ENCODE measurements at regions of chr1 and their contacts with region 1.

Region 1: DNA sequence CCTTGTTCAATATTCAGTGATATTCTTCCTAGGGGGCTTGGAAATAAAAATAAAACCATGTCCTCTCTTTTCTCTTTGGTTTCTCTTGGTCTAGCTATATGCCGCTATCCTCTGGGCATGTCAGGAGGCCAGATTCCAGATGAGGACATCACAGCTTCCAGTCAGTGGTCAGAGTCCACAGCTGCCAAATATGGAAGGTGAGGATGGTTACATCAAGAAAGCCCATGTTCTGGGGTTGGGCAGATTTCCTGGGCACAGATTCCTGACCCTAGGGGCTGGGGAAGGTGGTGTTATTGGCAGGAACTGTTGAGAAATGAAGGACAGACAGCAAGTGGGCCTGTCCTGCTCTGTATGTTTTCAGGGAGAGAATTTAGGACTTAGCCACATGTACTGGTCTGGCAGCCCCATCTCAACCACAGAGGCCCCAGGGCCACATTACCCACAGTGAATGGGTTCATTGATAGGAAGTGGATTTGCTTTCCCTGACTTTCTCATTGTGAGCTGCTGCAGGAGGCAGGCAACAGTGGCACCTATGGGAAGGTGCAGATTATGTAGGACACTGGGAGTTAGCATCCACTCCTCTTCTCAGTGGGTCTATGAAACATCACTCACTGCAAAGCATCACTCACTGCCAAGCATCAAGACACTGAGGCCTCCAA is 37.4 kb upstream of the HSD17B7 start:
- DNase-seq: peak; percentile 68
- ATAC-seq: peak; percentile 99
- H3K4me3 ChIP-seq: peak overlapping the region in 1 of 3 experiments; percentile 4; a peak in 1 of 6 replicates
- H3K27ac ChIP-seq: peak overlapping the region; percentile 30
- H3K4me1 ChIP-seq: peaks cover 18% of the 10 kb centered on the region
- H3K27me3 ChIP-seq: no peaks in the 10 kb centered on the region
- CTCF ChIP-seq: peak; percentile 50
- EP300 ChIP-seq: no peak
- POLR2A ChIP-seq: no peak
- RAD21 ChIP-seq: peak; percentile 19; the same call in 1 of the 2 replicates

Region 2: GRCh38 chr1:162206749-162207635 is 546.1 kb before region 1 on chr1:
- CTCF ChIA-PET with region 1: no interaction called
- POLR2A ChIA-PET with region 1: no interaction called
- in situ Hi-C with region 1: no loop called
- intact Hi-C with region 1: loop called (anchors 5 kb)
- DNase-seq: peak; percentile 21
- ATAC-seq: peak; percentile 34; the same call in 1 of the 3 replicates
- H3K4me3 ChIP-seq: no peak overlapping the region
- H3K27ac ChIP-seq: no peak overlapping the region
- H3K4me1 ChIP-seq: peaks cover 47% of the 10 kb centered on the region
- H3K27me3 ChIP-seq: no peaks in the 10 kb centered on the region; a peak in 1 of 5 replicates
- CTCF ChIP-seq: no peak
- EP300 ChIP-seq: no peak
- POLR2A ChIP-seq: no peak
- RAD21 ChIP-seq: no peak

Region 3: GRCh38 chr1:162596514-162597170 is 156.5 kb before region 1 on chr1:
- CTCF ChIA-PET with region 1: no interaction called
- POLR2A ChIA-PET with region 1: no interaction called
- in situ Hi-C with region 1: no loop called
- intact Hi-C with region 1: no loop called
- DNase-seq: peak; percentile 83
- ATAC-seq: peak; percentile 89
- H3K4me3 ChIP-seq: no peak overlapping the region; a peak in 2 of 6 replicates
- H3K27ac ChIP-seq: peak overlapping the region; percentile 85
- H3K4me1 ChIP-seq: peaks cover 29% of the 10 kb centered on the region
- H3K27me3 ChIP-seq: no peaks in the 10 kb centered on the region
- CTCF ChIP-seq: no peak
- EP300 ChIP-seq: peak in 1 of 2 experiments; percentile 73; a peak in 2 of 4 replicates
- POLR2A ChIP-seq: no peak
- RAD21 ChIP-seq: no peak

Region 4: GRCh38 chr1:162612606-162613400 is 140.3 kb before region 1 on chr1:
- CTCF ChIA-PET with region 1: interaction called, 3 read pairs
- POLR2A ChIA-PET with region 1: no interaction called
- in situ Hi-C with region 1: no loop called
- intact Hi-C with region 1: loop called (anchors 5 kb)
- DNase-seq: peak; percentile 4
- ATAC-seq: peak; percentile 58
- H3K4me3 ChIP-seq: no peak overlapping the region
- H3K27ac ChIP-seq: no peak overlapping the region
- H3K4me1 ChIP-seq: peaks cover 19% of the 10 kb centered on the region
- H3K27me3 ChIP-seq: no peaks in the 10 kb centered on the region
- CTCF ChIP-seq: no peak
- EP300 ChIP-seq: no peak
- POLR2A ChIP-seq: no peak
- RAD21 ChIP-seq: no peak

Region 5: GRCh38 chr1:162696286-162696862 is 56.8 kb before region 1 on chr1:
- CTCF ChIA-PET with region 1: no interaction called
- POLR2A ChIA-PET with region 1: no interaction called
- in situ Hi-C with region 1: no loop called
- intact Hi-C with region 1: loop called (anchors 2 kb)
- DNase-seq: peak; percentile 72
- ATAC-seq: peak; percentile 99
- H3K4me3 ChIP-seq: peak overlapping the region; percentile 38 to 68 (median 44); a peak in 5 of 6 replicates
- H3K27ac ChIP-seq: peak overlapping the region; percentile 50
- H3K4me1 ChIP-seq: peaks cover 37% of the 10 kb centered on the region
- H3K27me3 ChIP-seq: no peaks in the 10 kb centered on the region
- CTCF ChIP-seq: no peak
- EP300 ChIP-seq: no peak; a peak in 1 of 4 replicates
- POLR2A ChIP-seq: no peak; a peak in 1 of 4 replicates
- RAD21 ChIP-seq: no peak

Measured in HepG2 (cell line).